ENCODE measurements at regions of chr1 and their contacts with region 1.

Region 1: DNA sequence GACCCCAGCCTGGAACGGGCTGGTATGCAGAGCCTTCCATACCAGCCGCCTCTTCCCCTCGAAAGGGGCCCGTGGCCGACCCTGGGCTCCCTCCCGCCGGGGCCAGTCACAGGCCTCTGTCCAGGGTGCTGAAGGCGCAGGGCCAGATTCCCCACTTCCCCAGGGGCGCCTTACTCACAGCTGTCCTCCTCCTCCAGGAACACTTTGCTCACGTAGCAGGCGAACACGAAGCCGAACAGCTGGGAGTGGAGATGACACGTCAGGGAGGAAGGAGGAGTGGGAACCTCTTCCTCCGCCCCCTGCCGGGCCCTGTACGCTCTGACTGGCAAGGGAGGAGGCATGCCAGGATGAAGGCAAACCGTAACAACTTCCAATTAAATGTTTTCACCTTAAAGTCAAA is 57.3 kb downstream of the NKAIN1 start:
- DNase-seq: peak; percentile 69
- ATAC-seq: peak; percentile 66
- H3K4me3 ChIP-seq: peak overlapping the region; percentile 26 to 41
- H3K27ac ChIP-seq: no peak overlapping the region
- H3K4me1 ChIP-seq: peaks cover 7 to 18% of the 10 kb centered on the region in 2 experiments; a peak in 3 of 4 replicates
- H3K27me3 ChIP-seq: peaks cover 3% of the 10 kb centered on the region; the same call in 1 of the 2 replicates
- CTCF ChIP-seq: peak in 2 of 3 experiments; percentile 39 to 55; a peak in 4 of 6 replicates
- POLR2A ChIP-seq: no peak
- RAD21 ChIP-seq: no peak

Region 2: GRCh38 chr1:31170486-31170735 is 11.9 kb before region 1 on chr1:
- CTCF ChIA-PET with region 1: interaction called, 40 read pairs
- POLR2A ChIA-PET with region 1: no interaction called
- RAD21 ChIA-PET with region 1: interaction called in 1 of 2 experiments, 3 read pairs
- intact Hi-C with region 1: no loop called
- DNase-seq: no peak
- ATAC-seq: no peak
- H3K4me3 ChIP-seq: no peak overlapping the region
- H3K27ac ChIP-seq: peak overlapping the region; percentile 72
- H3K4me1 ChIP-seq: peaks cover 23 to 25% of the 10 kb centered on the region in 2 experiments
- H3K27me3 ChIP-seq: no peaks in the 10 kb centered on the region
- CTCF ChIP-seq: no peak
- POLR2A ChIP-seq: no peak
- RAD21 ChIP-seq: no peak

Region 3: GRCh38 chr1:31335007-31335406 is 152.7 kb after region 1 on chr1:
- CTCF ChIA-PET with region 1: interaction called, 8 read pairs
- POLR2A ChIA-PET with region 1: no interaction called
- RAD21 ChIA-PET with region 1: no interaction called
- intact Hi-C with region 1: loop called (anchors 1 kb)
- DNase-seq: peak; percentile 32
- ATAC-seq: peak; percentile 77
- H3K4me3 ChIP-seq: no peak overlapping the region
- H3K27ac ChIP-seq: no peak overlapping the region
- H3K4me1 ChIP-seq: no peaks in the 10 kb centered on the region
- H3K27me3 ChIP-seq: no peaks in the 10 kb centered on the region
- CTCF ChIP-seq: peak; percentile 59 to 77 (median 63)
- POLR2A ChIP-seq: no peak
- RAD21 ChIP-seq: peak; percentile 71

Region 4: GRCh38 chr1:31394628-31395193 is 212.4 kb after region 1 on chr1:
- CTCF ChIA-PET with region 1: interaction called, 14 read pairs
- POLR2A ChIA-PET with region 1: no interaction called
- RAD21 ChIA-PET with region 1: interaction called, 3 read pairs
- intact Hi-C with region 1: no loop called
- DNase-seq: peak; percentile 71
- ATAC-seq: peak; percentile 85
- H3K4me3 ChIP-seq: peak overlapping the region; percentile 21 to 45
- H3K27ac ChIP-seq: no peak overlapping the region
- H3K4me1 ChIP-seq: peaks cover 6 to 50% of the 10 kb centered on the region in 2 experiments; a peak in 2 of 4 replicates
- H3K27me3 ChIP-seq: no peaks in the 10 kb centered on the region
- CTCF ChIP-seq: peak; percentile 81 to 94 (median 88)
- POLR2A ChIP-seq: no peak
- RAD21 ChIP-seq: peak; percentile 89

Region 5: DNA sequence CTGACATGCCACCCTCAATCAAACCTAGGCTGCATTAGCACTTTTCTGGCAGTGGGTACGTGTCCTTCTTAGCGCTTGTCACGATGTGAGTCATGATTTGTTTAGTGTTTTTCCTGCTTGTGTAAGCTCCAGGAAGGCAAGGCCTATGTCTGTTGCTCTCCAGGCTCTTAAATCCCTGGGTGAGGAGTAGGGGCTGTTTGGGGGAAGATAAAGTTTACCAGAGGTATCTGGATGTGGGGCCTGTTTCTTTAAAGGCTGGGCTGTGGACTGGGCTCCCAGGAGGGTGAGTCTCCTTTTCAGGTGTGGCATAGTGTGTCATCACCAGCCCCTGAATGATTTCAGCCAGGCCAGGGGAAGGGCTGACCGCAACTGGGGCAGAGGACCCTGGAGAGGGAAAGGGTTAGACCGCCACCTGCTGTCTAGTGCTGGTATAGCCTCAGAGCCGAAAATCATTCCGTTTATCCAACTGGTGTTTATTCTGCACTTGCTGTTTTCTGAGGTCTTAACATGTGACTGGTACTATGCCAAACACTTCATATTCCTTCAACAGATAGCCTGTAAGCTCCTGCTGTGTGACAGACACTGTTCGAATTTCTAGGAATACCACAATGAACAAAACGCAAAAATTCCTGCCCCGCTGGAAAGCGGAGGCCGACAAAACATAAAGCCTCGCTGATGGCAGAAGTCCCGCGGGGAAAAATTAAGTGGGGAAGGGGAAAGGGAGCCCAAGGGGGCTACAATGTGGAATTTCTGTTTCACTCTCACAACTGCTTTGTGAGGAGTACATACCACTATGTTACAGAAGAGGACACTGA is 240.4 kb after region 1 on chr1:
- CTCF ChIA-PET with region 1: interaction called, 25 read pairs
- POLR2A ChIA-PET with region 1: no interaction called
- RAD21 ChIA-PET with region 1: no interaction called
- intact Hi-C with region 1: loop called (anchors 1 kb)
- DNase-seq: peak; percentile 84
- ATAC-seq: peak; percentile 89
- H3K4me3 ChIP-seq: peak overlapping the region in 1 of 2 experiments; percentile 10; a peak in 1 of 4 replicates
- H3K27ac ChIP-seq: peak overlapping the region; percentile 38
- H3K4me1 ChIP-seq: peaks cover 13 to 65% of the 10 kb centered on the region in 2 experiments
- H3K27me3 ChIP-seq: no peaks in the 10 kb centered on the region
- CTCF ChIP-seq: peak; percentile 95 to 98 (median 95)
- POLR2A ChIP-seq: no peak
- RAD21 ChIP-seq: peak; percentile 96

Region 6: GRCh38 chr1:31548907-31549808 is 366.8 kb after region 1 on chr1:
- CTCF ChIA-PET with region 1: interaction called, 49 read pairs
- POLR2A ChIA-PET with region 1: no interaction called
- RAD21 ChIA-PET with region 1: interaction called in 1 of 2 experiments, 7 read pairs
- intact Hi-C with region 1: loop called (anchors 1 kb)
- DNase-seq: peak; percentile 84
- ATAC-seq: peak; percentile 92
- H3K4me3 ChIP-seq: peak overlapping the region; percentile 41 to 52
- H3K27ac ChIP-seq: peak overlapping the region; percentile 44
- H3K4me1 ChIP-seq: peaks cover 12 to 21% of the 10 kb centered on the region in 2 experiments; a peak in 3 of 4 replicates
- H3K27me3 ChIP-seq: no peaks in the 10 kb centered on the region
- CTCF ChIP-seq: peak; percentile 89 to 98 (median 96)
- POLR2A ChIP-seq: peak; percentile 23
- RAD21 ChIP-seq: peak; percentile 96

Measured in HCT116 (cell line).